T-cell (primary cell): ENCODE measurements at regions of chr6 and their contacts with region 1.

Region 1: DNA sequence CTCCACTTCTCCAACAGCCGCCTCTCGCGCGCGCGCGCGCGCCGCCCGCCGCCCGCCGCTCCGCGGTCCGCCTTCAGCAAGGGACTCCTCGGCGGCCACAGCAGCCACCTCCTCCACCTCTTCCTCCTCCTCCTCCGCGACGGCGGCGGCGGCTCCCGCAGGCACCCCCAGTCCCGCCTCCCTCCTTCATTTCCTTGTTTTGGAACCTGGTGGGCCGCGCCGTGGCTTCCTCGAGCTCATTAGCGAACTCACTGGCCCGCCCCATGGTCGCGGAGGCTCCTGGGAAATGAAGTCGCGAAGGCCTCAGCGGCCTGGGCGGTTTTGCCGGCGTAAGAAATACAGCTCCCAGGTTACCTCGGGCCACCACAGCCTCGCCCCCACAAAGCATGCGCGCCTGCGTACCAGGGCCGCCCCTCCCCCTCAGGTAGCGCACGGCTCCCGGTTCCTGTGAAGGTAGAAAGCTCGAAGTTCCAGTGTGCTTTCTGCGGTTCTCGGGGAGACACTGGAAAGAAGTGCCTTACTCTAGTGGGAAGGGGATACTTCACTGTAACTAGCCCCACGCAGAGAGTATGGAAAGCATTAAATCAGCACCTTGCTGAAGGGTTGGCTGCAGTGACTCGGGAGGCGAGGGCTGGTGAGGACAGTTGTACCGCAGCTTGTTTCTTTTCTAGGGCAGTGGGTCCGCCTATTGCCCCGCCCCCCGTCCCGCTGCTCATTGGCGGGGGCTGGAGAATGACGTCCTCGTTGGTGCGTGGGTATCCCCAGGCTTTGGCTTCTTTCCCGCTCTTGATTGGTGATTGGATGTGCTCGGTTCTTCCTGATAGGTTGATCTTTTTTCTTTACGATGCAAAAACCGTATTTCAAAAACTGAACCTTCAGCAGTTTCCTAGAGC is at the start of gene CDK19:
- DNase-seq: peak; percentile 96 to 99 (median 98)
- ATAC-seq: peak; percentile 84 to 88 (median 84)
- H3K4me3 ChIP-seq: peak within 1 kb of the TSS; percentile 75 to 94
- H3K4me3 Mint-ChIP-seq: peak within 1 kb of the TSS; percentile 94 to 99 (median 99)
- H3K27ac ChIP-seq: peak within 1 kb of the TSS; percentile 81
- H3K27ac Mint-ChIP-seq: peak within 1 kb of the TSS; percentile 97 to 99
- H3K4me1 ChIP-seq: peaks cover 11 to 15% of the 10 kb centered on the region in 2 experiments
- H3K4me1 Mint-ChIP-seq: peaks cover 20 to 33% (median 32%) of the 10 kb centered on the region in 3 donors
- H3K27me3 ChIP-seq: no peaks in the 10 kb centered on the region
- H3K27me3 Mint-ChIP-seq: no peaks in the 10 kb centered on the region
- total RNA-seq, gene CDK19: 11.4 to 16.1 (median 14.2) TPM

Region 2: DNA sequence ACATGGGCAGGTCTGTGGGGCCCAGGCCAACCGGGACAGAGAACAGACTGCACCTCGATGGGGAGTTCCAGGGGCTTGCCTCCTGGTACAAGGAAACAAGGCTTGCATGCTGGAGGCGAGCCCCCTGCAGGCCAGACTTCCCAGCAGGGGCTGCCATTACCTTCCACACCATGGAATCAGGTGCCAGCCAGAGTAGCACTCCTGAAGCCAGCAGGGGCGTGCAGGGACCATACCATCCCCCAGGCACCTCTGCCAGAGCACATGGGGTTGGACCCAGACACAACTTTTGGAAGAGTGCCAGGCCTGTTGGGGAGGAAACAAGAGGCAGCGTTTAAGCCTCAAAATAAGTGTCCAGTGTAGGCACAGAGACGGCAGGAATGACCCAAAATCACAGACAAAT is 406.6 kb before region 1 on chr6:
- CTCF ChIA-PET with region 1: no interaction called
- POLR2A ChIA-PET with region 1: no interaction called
- DNase-seq: no peak
- ATAC-seq: no peak
- H3K4me3 ChIP-seq: no peak overlapping the region
- H3K4me3 Mint-ChIP-seq: no peak overlapping the region
- H3K27ac ChIP-seq: no peak overlapping the region
- H3K27ac Mint-ChIP-seq: no peak overlapping the region
- H3K4me1 ChIP-seq: no peaks in the 10 kb centered on the region
- H3K4me1 Mint-ChIP-seq: no peaks in the 10 kb centered on the region
- H3K27me3 ChIP-seq: peaks cover 0 to 4% of the 10 kb centered on the region in 2 experiments
- H3K27me3 Mint-ChIP-seq: peaks cover 4 to 8% of the 10 kb centered on the region in 2 donors

Region 3: DNA sequence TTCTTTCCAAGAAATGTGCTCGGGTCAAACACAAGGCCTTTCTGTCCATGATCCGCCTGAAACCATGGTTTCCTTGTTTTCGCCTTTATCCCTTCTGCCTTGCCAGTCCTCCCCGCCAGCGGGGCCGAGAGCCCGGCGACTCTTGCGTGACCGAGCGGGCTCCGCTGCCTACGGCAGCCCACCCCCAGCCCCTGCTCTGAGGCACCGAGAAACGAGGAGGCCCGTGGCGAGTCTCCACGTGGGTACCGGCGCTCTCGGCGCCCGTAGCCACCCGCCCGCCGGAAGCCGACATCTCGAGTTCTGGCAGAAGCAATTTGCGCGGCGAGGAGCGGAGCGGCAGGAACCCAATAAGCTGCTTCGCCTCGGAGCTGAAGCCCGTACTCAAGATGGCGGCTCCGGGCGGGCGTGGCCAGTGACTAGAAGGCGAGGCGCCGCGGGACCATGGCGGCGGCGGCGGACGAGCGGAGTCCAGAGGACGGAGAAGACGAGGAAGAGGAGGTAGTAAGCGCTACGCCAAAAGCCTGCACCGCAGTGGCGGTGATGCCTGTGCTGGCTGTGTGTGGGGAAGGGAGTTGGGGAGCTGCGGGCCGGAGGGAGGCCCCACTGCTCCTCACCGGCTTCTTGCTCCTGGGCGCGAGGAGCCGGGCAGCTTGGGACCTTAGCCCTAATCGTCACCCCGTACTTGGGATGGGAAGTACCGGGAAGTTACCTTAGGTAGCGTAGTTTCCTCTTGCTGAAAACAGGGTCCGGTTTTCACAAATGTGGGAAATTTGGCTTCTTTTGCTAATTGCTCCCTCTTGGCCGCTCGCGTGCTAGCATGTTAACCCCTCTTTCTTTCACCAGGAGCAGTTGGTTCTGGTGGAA is 143.1 kb after region 1 on chr6 and contains the start of gene GTF3C6:
- CTCF ChIA-PET with region 1: interaction called in 1 of 2 experiments, 12 read pairs
- POLR2A ChIA-PET with region 1: interaction called, 7 to 10 read pairs
- DNase-seq: peak; percentile 78 to 96 (median 91)
- ATAC-seq: peak; percentile 99 to 100 (median 99)
- H3K4me3 ChIP-seq: peak within 1 kb of the TSS; percentile 88 to 98
- H3K4me3 Mint-ChIP-seq: peak within 1 kb of the TSS; percentile 90 to 97 (median 95)
- H3K27ac ChIP-seq: peak within 1 kb of the TSS; percentile 94
- H3K27ac Mint-ChIP-seq: peak within 1 kb of the TSS; percentile 92 to 99
- H3K4me1 ChIP-seq: peaks cover 7 to 16% of the 10 kb centered on the region in 2 experiments
- H3K4me1 Mint-ChIP-seq: peaks cover 14 to 22% (median 18%) of the 10 kb centered on the region in 3 donors
- H3K27me3 ChIP-seq: no peaks in the 10 kb centered on the region
- H3K27me3 Mint-ChIP-seq: no peaks in the 10 kb centered on the region
- total RNA-seq, gene GTF3C6: 21.4 to 33.9 (median 30.3) TPM